GM23248 (cell line): ENCODE measurements at regions of chr3 and their contacts with region 1.

Region 1: DNA sequence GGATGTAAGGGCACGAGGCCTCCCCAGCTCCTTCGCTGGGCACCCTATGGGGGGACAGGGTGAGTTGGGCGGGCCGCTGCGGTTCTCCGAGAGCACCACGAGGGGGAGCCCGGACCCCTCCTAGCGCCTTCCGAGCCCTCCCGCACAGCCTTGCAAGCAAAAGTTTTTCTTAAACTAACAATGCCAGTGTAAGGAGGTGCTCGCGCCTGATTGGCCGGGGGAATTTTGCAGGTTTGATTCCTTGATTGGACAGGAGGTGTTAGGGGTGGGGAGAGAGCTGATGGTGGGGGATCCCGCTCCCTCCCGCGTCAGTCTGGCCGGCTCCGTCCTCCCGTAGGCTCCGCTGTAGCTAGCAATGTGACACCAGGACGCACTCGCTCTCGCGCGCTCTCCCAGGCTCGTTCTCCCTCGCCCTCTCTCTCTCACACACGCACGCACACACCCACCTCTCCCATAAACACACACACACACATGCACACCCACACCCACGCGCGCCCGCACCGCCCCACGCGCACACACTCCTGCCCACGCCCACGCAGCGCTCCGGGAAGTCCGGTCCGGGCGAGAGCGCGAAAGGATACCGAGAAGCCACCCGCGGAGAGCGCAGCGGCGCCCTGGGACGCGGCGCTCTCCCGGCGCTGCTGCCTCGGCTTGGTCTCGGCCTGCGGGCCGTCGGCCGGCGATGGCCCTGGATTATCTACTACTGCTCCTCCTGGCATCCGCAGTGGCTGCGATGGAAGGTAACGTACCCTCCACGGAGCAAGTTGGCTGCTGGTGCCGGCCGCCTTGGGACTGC is at the start of gene EPHB1:
- DNase-seq: peak; percentile 95
- H3K4me3 ChIP-seq: peak within 1 kb of the TSS; percentile 77
- H3K27ac ChIP-seq: no peak within 1 kb of the TSS
- H3K4me1 ChIP-seq: no peaks in the 10 kb centered on the region
- H3K27me3 ChIP-seq: peaks cover 10% of the 10 kb centered on the region; the same call in 1 of the 2 replicates
- total RNA-seq, gene EPHB1: 0.43 and 1.6 TPM in 2 replicates

Region 2: DNA sequence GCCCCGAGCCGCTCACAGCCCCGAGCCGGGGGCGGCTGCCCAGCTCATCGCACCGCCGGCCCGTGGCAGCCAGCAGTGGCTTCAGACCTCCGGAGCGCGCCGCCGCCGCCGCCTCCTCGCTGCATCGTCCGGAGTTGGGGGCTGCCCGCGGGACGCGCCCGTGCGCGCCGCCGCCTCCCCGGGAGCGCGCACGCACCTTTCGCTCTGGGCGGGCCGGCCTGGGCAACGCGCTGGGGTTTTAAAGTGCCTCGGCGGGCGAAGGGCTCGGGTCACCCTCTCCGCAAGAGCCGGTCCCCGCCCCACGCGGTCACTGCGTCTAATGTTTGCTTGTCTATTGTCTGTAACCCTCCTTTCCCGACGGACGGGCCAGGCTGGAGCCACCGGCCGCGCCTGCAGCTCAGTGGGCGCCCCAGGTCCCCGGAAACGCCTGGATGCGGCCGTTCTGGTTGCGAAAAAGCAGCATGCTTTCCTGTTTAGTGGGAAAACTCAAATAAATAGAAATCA is 544.4 kb before region 1 on chr3 and contains the start of gene RYK:
- in situ Hi-C with region 1: no loop called
- DNase-seq: peak; percentile 85
- H3K4me3 ChIP-seq: peak within 1 kb of the TSS; percentile 81
- H3K27ac ChIP-seq: peak within 1 kb of the TSS; percentile 72
- H3K4me1 ChIP-seq: peaks cover 20% of the 10 kb centered on the region
- H3K27me3 ChIP-seq: no peaks in the 10 kb centered on the region
- total RNA-seq, gene RYK: 93.7 and 100 TPM in 2 replicates

Region 3: GRCh38 chr3:134378384-134378783 is 416.8 kb before region 1 on chr3:
- in situ Hi-C with region 1: no loop called
- DNase-seq: no peak
- H3K4me3 ChIP-seq: no peak overlapping the region
- H3K27ac ChIP-seq: no peak overlapping the region
- H3K4me1 ChIP-seq: no peaks in the 10 kb centered on the region
- H3K27me3 ChIP-seq: no peaks in the 10 kb centered on the region

Region 4: DNA sequence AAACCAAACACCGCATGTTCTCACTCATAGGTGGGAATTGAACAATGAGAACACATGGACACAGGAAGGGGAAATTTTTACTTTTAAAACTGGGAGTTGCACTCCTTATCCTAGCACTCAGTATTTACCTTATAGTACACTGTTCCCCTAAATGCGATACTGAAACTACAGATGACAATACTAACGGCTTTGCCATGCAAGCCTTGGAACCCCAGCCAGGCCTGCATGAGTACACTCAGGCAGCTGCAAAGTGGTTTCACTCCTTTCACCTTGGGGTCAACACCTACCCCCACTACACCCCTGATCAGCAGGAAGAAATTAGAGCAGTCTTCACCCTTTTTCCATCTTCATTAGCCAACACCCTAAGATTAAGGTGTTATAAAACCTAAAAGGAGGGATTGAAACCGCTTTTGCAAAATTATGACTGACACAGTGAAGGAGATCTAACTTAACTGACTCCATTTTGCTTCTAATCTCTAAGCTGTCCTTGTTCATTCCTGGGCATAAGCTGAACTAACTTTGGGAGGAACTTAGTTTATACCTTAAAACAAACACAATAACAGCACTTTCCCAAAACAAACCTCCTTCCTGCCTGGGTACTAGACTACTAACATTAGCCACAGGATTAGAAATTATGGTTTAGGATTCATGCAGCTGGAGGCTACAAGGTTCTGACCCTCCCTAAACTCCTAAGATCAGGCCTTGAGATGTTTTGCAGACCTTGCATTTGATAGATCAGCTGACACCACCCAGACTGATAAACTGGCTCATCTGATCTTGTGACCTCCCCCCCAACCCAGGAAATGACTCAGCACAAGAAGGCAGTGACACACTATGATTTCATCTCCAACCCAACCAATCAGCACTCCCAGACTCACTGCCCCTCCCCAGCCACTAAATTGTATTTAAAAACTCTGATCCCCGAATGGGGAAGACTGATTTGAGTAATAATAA is 718.2 kb after region 1 on chr3:
- in situ Hi-C with region 1: loop called (anchors 10 kb)
- DNase-seq: peak; percentile 42
- H3K4me3 ChIP-seq: no peak overlapping the region
- H3K27ac ChIP-seq: no peak overlapping the region
- H3K4me1 ChIP-seq: no peaks in the 10 kb centered on the region
- H3K27me3 ChIP-seq: no peaks in the 10 kb centered on the region; the same call in 1 of the 2 replicates

Region 5: DNA sequence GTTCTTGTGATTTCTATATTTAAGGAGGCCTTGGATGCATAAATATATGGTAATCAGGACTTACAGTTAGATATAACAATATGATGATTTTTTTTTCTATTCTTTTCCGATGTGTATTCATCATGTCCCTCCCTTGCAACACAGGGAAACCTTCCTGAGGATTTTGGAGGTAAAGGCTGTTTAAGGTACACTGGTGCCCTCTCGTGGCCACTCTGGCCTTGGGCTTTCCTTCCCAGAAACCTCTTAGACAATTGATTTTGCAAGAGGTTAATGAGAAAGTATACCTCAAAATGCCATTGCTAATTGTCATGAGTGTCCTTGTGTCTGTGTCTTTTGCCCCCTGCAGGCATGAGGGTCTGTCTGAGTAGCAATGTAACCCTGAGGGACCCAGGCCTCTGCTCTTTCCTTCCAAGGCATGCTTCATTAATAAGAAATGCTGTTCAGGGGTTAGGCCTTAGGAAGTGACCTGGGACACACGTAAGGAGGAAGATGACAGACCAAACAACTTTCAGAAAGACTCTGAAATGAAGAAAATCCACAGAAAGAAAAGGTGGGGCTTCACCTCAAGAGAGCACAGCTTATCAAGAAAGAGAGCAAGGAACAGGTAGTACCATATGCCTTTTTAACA is 1100.1 kb after region 1 on chr3:
- in situ Hi-C with region 1: loop called (anchors 10 kb)
- DNase-seq: peak; percentile 89
- H3K4me3 ChIP-seq: no peak overlapping the region
- H3K27ac ChIP-seq: peak overlapping the region; percentile 62
- H3K4me1 ChIP-seq: peaks cover 29% of the 10 kb centered on the region
- H3K27me3 ChIP-seq: no peaks in the 10 kb centered on the region